HCT116 (cell line): ENCODE measurements at regions of chr5 and their contacts with region 1.

Region 1: DNA sequence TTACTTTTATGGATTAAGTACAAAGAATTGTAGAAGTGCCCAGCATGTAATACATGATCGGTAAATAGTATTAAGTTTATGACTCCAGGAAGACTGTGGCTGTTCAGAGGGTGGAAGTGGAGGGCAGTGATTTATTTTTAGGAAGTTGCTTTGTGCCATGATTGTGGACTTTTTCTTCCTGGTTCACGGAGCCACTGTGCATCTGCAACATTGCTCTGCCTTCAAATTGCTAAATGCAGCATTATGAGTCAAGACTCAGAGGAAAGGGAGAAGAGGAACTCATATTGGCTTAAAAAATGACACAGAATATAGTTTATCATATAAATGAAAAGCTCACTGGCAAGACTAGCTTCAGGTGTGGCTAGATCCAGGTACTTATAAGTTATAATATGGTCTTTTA is 301.5 kb downstream of the KCTD16 start:
- DNase-seq: no peak
- ATAC-seq: no peak
- H3K4me3 ChIP-seq: no peak overlapping the region
- H3K27ac ChIP-seq: no peak overlapping the region
- H3K4me1 ChIP-seq: no peaks in the 10 kb centered on the region
- H3K27me3 ChIP-seq: peaks cover 23% of the 10 kb centered on the region
- CTCF ChIP-seq: no peak
- POLR2A ChIP-seq: no peak
- RAD21 ChIP-seq: no peak

Region 2: DNA sequence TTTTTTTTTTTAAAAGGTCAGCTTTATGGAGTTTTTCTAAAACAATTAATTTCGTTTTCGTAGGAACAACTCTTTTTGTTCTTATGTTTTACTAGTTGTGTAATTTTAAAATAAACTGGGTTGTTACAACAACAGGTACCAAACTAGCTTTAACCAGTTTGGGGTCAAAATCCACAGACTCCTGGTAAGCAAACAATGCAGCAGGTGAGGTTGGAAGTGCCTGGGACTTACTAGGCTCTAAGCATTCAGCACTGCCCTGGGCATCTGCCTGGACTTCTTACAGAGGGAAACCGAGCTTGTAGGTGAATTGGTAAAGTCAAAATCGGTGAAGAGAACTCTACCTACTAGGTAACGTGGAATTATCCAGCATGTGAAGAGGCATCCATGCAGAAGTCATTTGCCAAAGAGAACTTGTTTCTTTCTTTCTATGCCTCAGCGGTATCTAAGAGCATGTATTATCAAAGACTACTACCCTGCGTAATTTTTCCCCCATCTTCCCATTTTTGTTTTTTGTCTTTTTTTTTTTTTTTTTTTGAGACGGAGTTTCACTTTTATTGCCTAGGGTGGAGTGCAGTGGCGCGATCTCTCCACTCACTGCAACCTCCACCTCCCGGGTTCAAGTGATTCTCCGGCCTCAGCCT is 156.1 kb before region 1 on chr5:
- CTCF ChIA-PET with region 1: no interaction called
- POLR2A ChIA-PET with region 1: no interaction called
- RAD21 ChIA-PET with region 1: no interaction called
- intact Hi-C with region 1: no loop called
- DNase-seq: no peak
- ATAC-seq: no peak
- H3K4me3 ChIP-seq: no peak overlapping the region
- H3K27ac ChIP-seq: no peak overlapping the region
- H3K4me1 ChIP-seq: no peaks in the 10 kb centered on the region
- H3K27me3 ChIP-seq: peaks cover 24% of the 10 kb centered on the region
- CTCF ChIP-seq: no peak
- POLR2A ChIP-seq: no peak
- RAD21 ChIP-seq: no peak

Region 3: DNA sequence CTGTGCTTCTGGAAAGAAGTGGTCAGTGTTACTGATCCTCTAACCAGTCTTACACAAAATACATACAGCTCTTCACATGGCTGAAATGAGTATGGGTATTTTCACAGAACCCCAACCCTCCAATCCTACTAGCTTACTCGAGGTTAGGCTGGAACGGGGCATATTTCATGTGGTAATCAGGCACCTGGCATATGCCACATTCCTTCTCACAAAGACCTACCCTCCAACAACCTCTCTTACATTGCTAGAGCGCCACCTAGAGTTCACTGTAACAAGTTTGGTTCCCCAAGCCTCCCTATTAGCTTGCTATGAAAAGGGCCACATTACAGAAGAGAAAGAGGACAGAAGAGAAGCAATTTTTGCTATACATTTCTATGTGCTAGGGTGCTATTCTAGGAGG is 765.6 kb after region 1 on chr5:
- CTCF ChIA-PET with region 1: interaction called, 5 read pairs
- POLR2A ChIA-PET with region 1: no interaction called
- RAD21 ChIA-PET with region 1: no interaction called
- intact Hi-C with region 1: loop called (anchors 10 kb)
- DNase-seq: peak; percentile 69
- ATAC-seq: peak; percentile 99
- H3K4me3 ChIP-seq: no peak overlapping the region
- H3K27ac ChIP-seq: no peak overlapping the region
- H3K4me1 ChIP-seq: no peaks in the 10 kb centered on the region
- H3K27me3 ChIP-seq: no peaks in the 10 kb centered on the region
- CTCF ChIP-seq: peak; percentile 52 to 90 (median 75); a peak in 5 of 6 replicates
- POLR2A ChIP-seq: no peak
- RAD21 ChIP-seq: peak; percentile 80